Activated CD8-positive, alpha-beta T cell treated with anti-CD3 and anti-CD28 coated beads, Interleukin-2, amount 10 ng/mL, durations not matched to agents 7 days and 5 days (primary cell): ENCODE measurements at regions of chr1 and their contacts with region 1.

Region 1: GRCh38 chr1:2174348-2175054 is 20.1 kb downstream of the FAAP20 start:
- DNase-seq: peak; percentile 43
- ATAC-seq: peak; percentile 68
- H3K4me3 Mint-ChIP-seq: no peak overlapping the region
- H3K27ac Mint-ChIP-seq: no peak overlapping the region
- H3K4me1 Mint-ChIP-seq: no peaks in the 10 kb centered on the region
- H3K27me3 Mint-ChIP-seq: no peaks in the 10 kb centered on the region

Region 2: GRCh38 chr1:2133039-2133878 is 41.2 kb before region 1 on chr1:
- CTCF ChIA-PET with region 1: interaction called, 36 read pairs
- POLR2A ChIA-PET with region 1: no interaction called
- DNase-seq: peak; percentile 98
- ATAC-seq: peak; percentile 94
- H3K4me3 Mint-ChIP-seq: peak overlapping the region; percentile 65
- H3K27ac Mint-ChIP-seq: peak overlapping the region; percentile 78
- H3K4me1 Mint-ChIP-seq: peaks cover 23% of the 10 kb centered on the region
- H3K27me3 Mint-ChIP-seq: no peaks in the 10 kb centered on the region

Region 3: GRCh38 chr1:2148691-2149090 is 25.8 kb before region 1 on chr1:
- CTCF ChIA-PET with region 1: interaction called, 42 read pairs
- POLR2A ChIA-PET with region 1: interaction called, 4 read pairs
- DNase-seq: peak; percentile 89
- ATAC-seq: peak; percentile 75
- H3K4me3 Mint-ChIP-seq: no peak overlapping the region
- H3K27ac Mint-ChIP-seq: no peak overlapping the region
- H3K4me1 Mint-ChIP-seq: peaks cover 31% of the 10 kb centered on the region
- H3K27me3 Mint-ChIP-seq: no peaks in the 10 kb centered on the region

Region 4: DNA sequence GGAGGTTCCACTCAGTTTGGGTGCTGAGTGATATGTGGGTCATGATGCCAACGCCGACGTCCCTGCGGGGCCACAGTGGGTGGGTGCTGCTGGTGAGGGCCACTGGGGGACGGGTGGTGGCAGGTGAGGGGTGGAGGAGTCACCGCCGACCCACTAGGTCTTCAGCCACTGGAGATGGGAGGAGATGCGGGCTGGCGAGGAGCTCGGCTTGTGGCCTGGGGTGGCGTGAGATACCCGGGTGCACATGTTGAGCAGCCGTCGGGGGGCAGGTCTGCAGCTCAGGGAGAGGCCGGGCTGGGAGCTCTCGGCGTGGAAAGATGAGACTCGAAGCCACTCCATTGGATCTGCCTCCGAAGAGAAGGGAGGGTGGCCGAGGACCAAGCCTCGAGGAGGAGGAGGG is 20.5 kb before region 1 on chr1:
- CTCF ChIA-PET with region 1: interaction called, 42 read pairs
- POLR2A ChIA-PET with region 1: interaction called, 4 read pairs
- DNase-seq: no peak
- ATAC-seq: no peak
- H3K4me3 Mint-ChIP-seq: no peak overlapping the region
- H3K27ac Mint-ChIP-seq: no peak overlapping the region
- H3K4me1 Mint-ChIP-seq: peaks cover 26% of the 10 kb centered on the region
- H3K27me3 Mint-ChIP-seq: no peaks in the 10 kb centered on the region

Region 5: GRCh38 chr1:2163205-2163604 is 11.3 kb before region 1 on chr1:
- CTCF ChIA-PET with region 1: interaction called, 17 read pairs
- POLR2A ChIA-PET with region 1: no interaction called
- DNase-seq: peak; percentile 29
- ATAC-seq: no peak
- H3K4me3 Mint-ChIP-seq: no peak overlapping the region
- H3K27ac Mint-ChIP-seq: peak overlapping the region; percentile 73
- H3K4me1 Mint-ChIP-seq: peaks cover 9% of the 10 kb centered on the region
- H3K27me3 Mint-ChIP-seq: no peaks in the 10 kb centered on the region

Region 6: DNA sequence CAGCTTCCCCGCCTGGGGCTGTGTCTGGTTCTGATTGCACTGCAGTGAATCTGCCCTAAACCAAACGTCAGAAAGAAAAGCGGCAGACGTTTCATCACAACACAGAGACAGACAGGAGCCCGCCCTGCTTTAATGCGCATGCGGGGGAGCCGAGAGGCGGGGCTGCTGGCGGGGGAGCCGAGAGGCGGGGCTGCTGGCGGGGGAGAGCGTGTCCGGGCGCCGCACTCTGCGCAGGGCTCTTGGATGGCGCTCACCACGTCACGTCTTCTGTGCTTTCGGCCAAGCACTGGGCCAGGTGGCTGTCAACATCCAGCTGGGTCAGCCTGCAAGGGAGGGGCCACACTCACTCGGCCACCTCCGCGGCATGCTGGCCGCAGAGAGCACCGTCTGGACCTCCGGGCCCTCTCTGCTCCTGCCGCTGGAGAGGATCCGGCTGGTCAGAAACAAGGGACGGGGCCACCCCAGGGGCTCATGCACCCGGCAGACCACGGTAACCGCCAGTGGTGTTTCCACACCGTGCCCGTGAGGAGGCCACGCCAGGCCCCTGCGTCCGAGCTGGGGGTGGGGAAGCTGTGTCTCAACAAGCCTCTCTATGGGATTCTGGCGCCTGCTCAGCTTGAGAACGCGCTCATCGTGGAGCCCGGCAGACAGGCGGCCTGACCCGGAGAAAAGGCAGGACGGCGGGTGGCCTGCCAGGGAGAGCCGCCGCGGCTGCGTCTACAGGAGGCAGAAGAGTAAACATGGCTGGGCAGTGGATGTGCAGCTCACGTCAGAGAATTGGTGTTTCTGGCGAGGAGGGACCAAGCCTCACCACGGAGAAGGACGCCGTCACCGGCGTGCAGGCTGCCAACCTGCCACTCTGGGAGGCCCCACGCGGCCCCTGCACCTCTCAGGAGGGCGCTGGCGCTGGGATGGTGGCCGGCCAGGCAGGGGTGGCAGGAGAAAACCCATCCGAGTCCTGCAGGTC is 15.2 kb after region 1 on chr1:
- CTCF ChIA-PET with region 1: interaction called, 12 read pairs
- POLR2A ChIA-PET with region 1: no interaction called
- DNase-seq: peak; percentile 94
- ATAC-seq: peak; percentile 95
- H3K4me3 Mint-ChIP-seq: peak overlapping the region; percentile 79
- H3K27ac Mint-ChIP-seq: peak overlapping the region; percentile 94
- H3K4me1 Mint-ChIP-seq: peaks cover 23% of the 10 kb centered on the region
- H3K27me3 Mint-ChIP-seq: no peaks in the 10 kb centered on the region

Region 7: DNA sequence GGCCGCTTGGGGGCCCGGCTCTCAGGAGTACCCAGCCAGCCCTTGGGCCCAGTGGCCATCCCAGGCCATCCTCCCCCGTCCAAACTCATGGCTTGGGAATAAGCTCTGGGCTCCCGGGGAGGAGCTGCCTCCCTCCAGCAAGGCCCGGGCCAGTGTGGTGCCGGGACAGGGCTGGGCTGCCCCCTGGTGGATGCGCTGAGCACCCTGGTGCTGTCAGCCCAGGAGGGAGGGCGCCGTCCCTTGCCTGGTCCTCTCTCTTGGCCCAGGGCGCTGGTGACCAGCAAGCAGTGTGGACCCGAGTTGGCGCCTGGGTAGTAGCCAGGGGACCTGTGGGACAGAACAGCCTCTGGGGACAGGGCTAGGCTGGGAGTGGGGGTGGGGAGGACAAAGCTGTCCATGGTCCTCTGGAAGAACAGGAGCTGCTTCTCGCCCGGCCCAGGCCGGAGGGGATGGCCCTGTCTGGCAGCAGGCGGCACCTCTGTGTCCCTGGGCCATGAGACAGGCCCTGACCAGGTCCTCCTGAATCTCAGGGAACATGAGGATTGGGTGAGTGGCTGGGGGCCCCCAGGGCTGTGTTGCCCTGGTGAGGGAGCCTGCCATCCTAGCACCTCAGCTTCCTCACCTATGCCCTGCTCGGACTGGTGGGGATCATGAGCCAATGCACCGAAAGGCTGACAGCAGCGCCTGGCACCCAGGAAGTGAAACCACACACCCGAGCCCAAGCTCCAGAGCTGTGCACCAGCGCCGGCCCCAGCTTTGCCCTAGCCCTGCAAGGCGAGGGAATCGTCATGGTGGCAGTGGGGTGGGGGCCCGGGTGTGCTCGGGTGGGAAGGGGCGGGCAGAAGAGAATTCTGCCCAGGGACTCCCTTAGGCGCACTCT is 207.5 kb after region 1 on chr1:
- CTCF ChIA-PET with region 1: interaction called, 10 read pairs
- POLR2A ChIA-PET with region 1: no interaction called
- DNase-seq: peak; percentile 81
- ATAC-seq: peak; percentile 97
- H3K4me3 Mint-ChIP-seq: no peak overlapping the region
- H3K27ac Mint-ChIP-seq: no peak overlapping the region
- H3K4me1 Mint-ChIP-seq: peaks cover 9% of the 10 kb centered on the region
- H3K27me3 Mint-ChIP-seq: no peaks in the 10 kb centered on the region